ENCODE measurements at regions of chr20 and their contacts with region 1.

Region 1: GRCh38 chr20:36605399-36606157 is at the start of gene RAB5IF:
- DNase-seq: peak; percentile 78
- H3K4me3 ChIP-seq: peak within 1 kb of the TSS; percentile 94
- CTCF ChIP-seq: peak; percentile 94

Region 2: GRCh38 chr20:35978041-35978513 is 627.5 kb before region 1 on chr20:
- CTCF ChIA-PET with region 1: no interaction called
- POLR2A ChIA-PET with region 1: no interaction called
- DNase-seq: no peak
- H3K4me3 ChIP-seq: no peak overlapping the region
- CTCF ChIP-seq: no peak

Region 3: GRCh38 chr20:36181934-36182603 is 423.5 kb before region 1 on chr20:
- CTCF ChIA-PET with region 1: no interaction called
- POLR2A ChIA-PET with region 1: no interaction called
- DNase-seq: no peak
- H3K4me3 ChIP-seq: no peak overlapping the region
- CTCF ChIP-seq: no peak

Region 4: GRCh38 chr20:36562724-36563123 is 42.9 kb before region 1 on chr20:
- CTCF ChIA-PET with region 1: interaction called, 58 read pairs
- POLR2A ChIA-PET with region 1: interaction called, 3 read pairs
- DNase-seq: no peak
- H3K4me3 ChIP-seq: no peak overlapping the region
- CTCF ChIP-seq: no peak

Region 5: GRCh38 chr20:36573103-36573794 is 32.3 kb before region 1 on chr20 and contains the start of gene TGIF2:
- CTCF ChIA-PET with region 1: interaction called, 48 read pairs
- POLR2A ChIA-PET with region 1: no interaction called
- DNase-seq: no peak
- H3K4me3 ChIP-seq: peak within 1 kb of the TSS; percentile 70
- CTCF ChIP-seq: no peak

Region 6: GRCh38 chr20:36578356-36579041 is 27.1 kb before region 1 on chr20:
- CTCF ChIA-PET with region 1: interaction called, 48 read pairs
- POLR2A ChIA-PET with region 1: no interaction called
- DNase-seq: no peak
- H3K4me3 ChIP-seq: no peak overlapping the region
- CTCF ChIP-seq: no peak

Region 7: DNA sequence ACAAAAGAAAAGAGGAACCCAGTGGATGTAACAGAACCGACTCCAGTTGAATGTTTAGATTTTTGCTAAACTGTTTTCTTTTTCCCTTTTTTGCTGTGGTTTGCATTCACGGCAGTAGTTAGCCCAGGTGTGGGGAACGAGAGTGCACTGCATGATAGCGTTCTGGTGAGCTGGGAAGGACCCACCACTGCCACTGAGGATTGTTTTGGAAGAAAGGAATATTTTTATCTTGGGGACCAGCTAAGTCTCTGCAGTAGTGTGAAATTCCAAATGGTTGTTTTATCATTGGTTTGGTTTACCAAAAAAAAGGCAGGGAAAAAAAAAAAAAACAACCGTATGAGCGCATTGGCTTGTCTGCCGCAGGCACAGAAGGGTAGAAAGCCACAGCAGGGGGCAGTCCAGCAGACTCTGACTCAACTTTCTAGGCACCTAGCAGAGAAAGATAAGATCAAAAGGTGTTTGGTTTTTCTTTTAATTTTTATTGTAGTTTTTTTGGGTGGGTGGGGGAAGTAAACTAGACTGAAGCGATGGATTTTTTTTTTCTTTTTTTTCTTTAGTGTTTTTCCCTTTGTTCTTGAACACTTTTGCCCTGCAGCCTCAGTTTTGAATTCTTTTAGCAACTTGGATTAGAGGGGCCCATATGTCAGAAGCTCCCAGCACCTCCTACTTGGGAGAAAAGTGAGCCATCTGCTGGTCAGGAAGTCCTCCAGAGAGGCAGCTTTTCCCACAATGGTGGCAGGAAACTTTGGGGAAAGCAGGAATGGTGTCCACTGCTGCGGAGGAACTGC is 13.5 kb before region 1 on chr20:
- CTCF ChIA-PET with region 1: interaction called, 99 read pairs
- POLR2A ChIA-PET with region 1: interaction called, 4 read pairs
- DNase-seq: no peak
- H3K4me3 ChIP-seq: no peak overlapping the region
- CTCF ChIP-seq: peak; percentile 59

Region 8: DNA sequence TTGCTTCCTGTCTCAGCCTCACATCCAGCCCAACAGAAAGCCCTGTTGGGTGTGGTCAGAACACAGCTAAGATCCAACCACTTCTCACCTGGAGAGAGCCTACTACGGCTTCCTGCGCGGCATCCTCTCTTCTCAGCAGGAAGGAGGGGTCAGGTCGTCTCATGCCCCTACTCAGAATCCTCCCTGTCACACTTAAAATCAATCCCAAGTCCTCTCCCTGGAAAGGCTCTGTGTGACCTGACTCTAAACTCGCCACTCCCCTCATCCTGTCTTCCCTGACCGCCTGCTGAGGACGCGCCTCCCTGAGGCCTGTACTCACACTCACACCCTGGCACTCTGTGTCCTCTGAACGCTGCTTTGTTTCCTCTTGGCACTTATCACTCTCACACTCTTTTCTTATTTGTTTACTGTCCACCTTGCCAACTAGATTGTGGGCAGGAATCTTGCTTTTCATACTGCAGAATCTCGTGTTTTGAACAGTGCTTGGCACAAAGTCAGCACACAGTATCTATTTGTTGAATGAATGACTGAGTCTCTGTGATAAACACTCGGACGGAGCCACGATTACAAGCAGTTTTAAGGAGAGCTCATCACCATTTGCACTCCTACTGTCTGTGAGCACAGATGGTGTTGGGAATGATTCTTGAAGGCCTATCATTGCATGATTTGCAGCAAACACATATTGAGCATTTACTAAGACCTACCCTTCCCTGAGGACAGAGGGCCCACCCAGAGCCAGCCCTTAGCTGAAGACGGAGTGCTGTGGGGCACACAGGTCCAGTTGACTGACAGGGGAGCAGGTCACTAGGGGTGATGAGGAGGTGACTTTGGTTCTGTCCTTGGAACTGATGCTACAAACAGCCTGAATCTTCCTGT is 18.7 kb after region 1 on chr20:
- CTCF ChIA-PET with region 1: interaction called, 10 read pairs
- POLR2A ChIA-PET with region 1: interaction called, 3 read pairs
- DNase-seq: no peak
- H3K4me3 ChIP-seq: no peak overlapping the region
- CTCF ChIP-seq: no peak

Region 9: GRCh38 chr20:36754656-36755222 is 149.2 kb after region 1 on chr20:
- CTCF ChIA-PET with region 1: interaction called, 98 read pairs
- POLR2A ChIA-PET with region 1: interaction called, 3 read pairs
- DNase-seq: peak; percentile 10
- H3K4me3 ChIP-seq: no peak overlapping the region
- CTCF ChIP-seq: peak; percentile 83